ENCODE measurements at regions of chr19 and their contacts with region 1.

Region 1: DNA sequence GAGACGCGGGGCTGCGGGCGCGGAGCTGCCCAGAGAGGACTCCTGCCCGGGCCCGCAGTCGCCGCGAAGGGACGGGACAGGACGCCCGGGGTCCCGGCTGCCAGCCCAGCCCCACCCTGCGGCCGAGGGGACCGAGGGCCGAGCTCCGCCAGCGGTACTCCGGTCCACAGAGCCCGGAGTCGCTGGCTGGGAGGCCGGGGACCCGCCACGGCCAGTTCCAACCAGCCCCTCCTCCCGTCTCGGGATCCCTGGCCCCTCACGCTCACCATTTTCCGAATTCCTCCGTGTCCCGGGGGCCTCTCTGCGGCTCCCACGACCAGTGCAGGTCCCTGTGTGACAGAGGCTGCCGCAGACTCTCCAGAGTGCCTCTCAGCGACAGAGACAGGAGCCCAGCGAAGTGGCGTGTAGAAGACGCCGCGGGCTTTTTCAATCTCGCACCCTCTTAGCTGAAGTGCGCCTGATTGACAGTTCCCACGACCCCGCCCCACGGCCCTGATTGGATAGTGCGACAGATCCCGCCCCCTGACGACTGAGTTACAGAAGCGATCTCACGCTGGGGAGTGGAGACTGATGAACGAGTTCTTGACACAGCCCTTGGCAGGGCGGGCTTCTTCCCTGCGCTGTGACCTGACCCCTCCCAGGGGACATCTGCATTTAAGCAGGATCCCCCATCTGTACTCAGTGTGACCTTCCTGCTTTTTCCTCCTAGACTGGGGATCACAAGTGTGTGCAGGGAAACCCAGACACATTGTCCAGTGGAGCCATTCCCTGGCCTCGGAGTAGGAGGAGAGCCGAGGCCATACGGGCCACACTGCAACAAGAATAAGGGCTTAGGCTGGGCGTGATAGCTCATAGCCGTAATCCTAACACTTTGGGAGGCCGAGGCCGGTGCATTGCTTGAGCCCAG is 44.0 kb downstream of the ZNF823 start:
- DNase-seq: peak; percentile 79
- ATAC-seq: peak; percentile 99
- H3K4me3 ChIP-seq: peak overlapping the region; percentile 78 to 80
- H3K27ac ChIP-seq: peak overlapping the region; percentile 75
- H3K4me1 ChIP-seq: no peaks in the 10 kb centered on the region
- H3K27me3 ChIP-seq: no peaks in the 10 kb centered on the region
- CTCF ChIP-seq: no peak

Region 2: DNA sequence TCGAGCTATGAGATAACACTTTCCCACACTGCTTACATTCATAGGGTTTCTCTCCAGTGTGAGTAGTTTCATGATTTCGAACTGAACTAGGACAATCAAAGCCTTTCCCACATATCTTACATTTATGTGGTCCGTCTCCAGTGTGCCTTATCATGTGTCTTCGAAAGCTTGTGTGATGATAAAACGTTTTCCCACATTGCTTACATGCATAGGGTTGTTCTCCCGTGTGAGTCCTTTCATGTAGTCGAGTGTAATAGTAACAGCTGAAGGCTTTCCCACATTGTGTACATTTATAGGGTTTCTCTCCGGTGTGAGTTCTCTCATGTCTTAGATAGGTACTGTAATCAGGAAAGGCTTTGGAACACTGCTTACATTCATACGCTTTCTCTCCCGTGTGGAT is 27.6 kb after region 1 on chr19:
- CTCF ChIA-PET with region 1: no interaction called
- POLR2A ChIA-PET with region 1: interaction called, 11 read pairs
- in situ Hi-C with region 1: no loop called
- intact Hi-C with region 1: no loop called
- DNase-seq: no peak
- ATAC-seq: no peak
- H3K4me3 ChIP-seq: no peak overlapping the region
- H3K27ac ChIP-seq: no peak overlapping the region
- H3K4me1 ChIP-seq: no peaks in the 10 kb centered on the region
- H3K27me3 ChIP-seq: no peaks in the 10 kb centered on the region
- CTCF ChIP-seq: no peak

Measured in Panc1 (cell line).